ENCODE measurements at regions of chr12 and their contacts with region 1.

Region 1: DNA sequence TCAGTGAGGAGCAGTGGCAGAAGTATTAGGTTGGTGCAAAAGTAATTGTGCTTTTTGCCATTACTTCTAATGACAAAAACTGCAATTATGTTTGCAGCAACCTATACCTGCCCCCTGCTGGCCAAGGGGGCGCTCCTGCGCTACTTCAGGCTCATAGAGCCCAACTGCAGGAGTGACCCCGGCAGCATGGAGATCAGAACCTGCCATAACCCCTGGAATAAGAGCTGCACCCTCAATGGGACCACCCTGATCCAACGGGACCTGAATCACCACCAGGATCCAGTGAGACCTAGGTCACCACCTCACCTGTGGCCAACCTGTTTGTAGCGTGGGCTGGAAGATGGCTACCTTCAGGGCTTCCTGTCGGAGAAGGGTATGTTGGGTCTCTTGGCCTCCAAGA is 8.2 kb upstream of the C12orf42 start:
- DNase-seq: peak; percentile 28
- H3K4me3 ChIP-seq: no peak overlapping the region
- H3K27ac ChIP-seq: no peak overlapping the region
- H3K4me1 ChIP-seq: no peaks in the 10 kb centered on the region
- H3K27me3 ChIP-seq: no peaks in the 10 kb centered on the region
- CTCF ChIP-seq: peak; percentile 44

Region 2: DNA sequence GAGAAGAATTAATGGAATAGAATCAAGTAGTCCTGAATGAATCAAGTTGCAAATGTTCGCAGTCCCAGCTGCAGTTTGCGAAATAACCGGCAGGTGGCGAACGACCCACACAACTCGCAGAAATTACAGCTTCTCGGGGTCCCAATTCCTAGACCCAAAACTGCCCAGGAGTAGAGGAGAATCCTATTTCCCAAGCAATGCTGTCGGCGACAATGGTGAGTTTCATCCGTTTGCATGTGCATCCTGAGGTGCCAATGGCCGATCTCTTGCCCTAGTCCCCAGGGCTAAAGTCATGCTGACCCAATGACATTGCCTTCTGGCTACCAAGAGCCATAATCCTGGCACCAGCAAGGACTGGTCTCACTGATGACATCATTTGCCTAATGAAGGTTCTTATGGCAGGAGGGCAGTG is 555.0 kb before region 1 on chr12:
- intact Hi-C with region 1: loop called (anchors 5 kb)
- DNase-seq: peak; percentile 46
- H3K4me3 ChIP-seq: no peak overlapping the region
- H3K27ac ChIP-seq: no peak overlapping the region
- H3K4me1 ChIP-seq: no peaks in the 10 kb centered on the region
- H3K27me3 ChIP-seq: peaks cover 26% of the 10 kb centered on the region
- CTCF ChIP-seq: peak; percentile 96

Region 3: GRCh38 chr12:103623716-103624115 is 119.7 kb after region 1 on chr12:
- intact Hi-C with region 1: no loop called
- DNase-seq: no peak
- H3K4me3 ChIP-seq: no peak overlapping the region
- H3K27ac ChIP-seq: no peak overlapping the region
- H3K4me1 ChIP-seq: no peaks in the 10 kb centered on the region
- H3K27me3 ChIP-seq: no peaks in the 10 kb centered on the region
- CTCF ChIP-seq: no peak

Measured in colonic mucosa (tissue), 4 donors.